Common myeloid progenitor, CD34-positive (primary cell): ENCODE measurements at regions of chr22 and their contacts with region 1.

Region 1: GRCh38 chr22:40088818-40089217 is 88.9 kb upstream of the TNRC6B start:
- DNase-seq: no peak
- H3K4me3 ChIP-seq: no peak overlapping the region
- H3K27ac ChIP-seq: no peak overlapping the region
- H3K4me1 ChIP-seq: peaks cover 7 to 18% (median 8%) of the 10 kb centered on the region in 4 experiments
- H3K27me3 ChIP-seq: no peaks in the 10 kb centered on the region

Region 2: DNA sequence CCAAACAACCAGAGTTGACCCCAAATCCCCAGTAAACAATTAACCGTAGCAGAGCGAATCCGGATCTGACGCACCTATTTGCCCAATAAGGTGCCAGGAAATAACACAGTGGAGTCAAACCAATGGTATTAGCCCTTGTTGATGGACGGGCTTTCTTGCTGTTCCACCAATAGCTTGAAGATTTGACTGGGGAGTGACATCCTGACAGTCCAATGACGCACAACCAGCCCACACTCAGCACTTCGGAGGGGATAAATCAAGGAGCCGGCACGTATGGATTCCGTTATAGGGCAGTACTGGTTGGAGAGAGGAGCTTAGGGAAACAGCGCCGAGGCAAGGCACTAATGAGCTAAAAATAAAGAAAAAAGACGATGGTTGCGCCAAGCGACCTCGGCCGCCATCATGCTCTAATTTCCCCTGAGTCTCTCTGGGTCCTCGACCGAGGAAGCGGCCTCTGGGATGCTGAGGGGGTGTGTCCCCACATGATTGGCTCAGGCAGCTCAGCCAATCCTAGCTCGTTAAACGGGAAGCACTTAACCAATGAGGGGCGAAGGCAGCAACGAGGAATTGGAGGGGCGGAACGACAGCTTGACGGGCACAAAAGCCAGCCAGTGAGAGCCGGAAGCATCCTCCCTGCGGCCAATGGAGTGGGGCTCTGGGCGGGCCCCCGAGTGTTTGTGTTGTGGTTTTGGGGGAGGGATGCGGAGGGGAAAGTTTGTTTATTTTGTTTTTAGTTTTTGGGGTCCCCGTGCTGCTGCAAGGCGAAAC is 44.5 kb before region 1 on chr22:
- CTCF ChIA-PET with region 1: interaction called, 3 read pairs
- POLR2A ChIA-PET with region 1: interaction called, 10 read pairs
- DNase-seq: peak; percentile 100
- H3K4me3 ChIP-seq: peak overlapping the region; percentile 75 to 98 (median 85)
- H3K27ac ChIP-seq: peak overlapping the region; percentile 96 to 97
- H3K4me1 ChIP-seq: peaks cover 14 to 48% (median 39%) of the 10 kb centered on the region in 4 experiments
- H3K27me3 ChIP-seq: no peaks in the 10 kb centered on the region

Region 3: GRCh38 chr22:40178417-40179409 is 89.9 kb after region 1 on chr22:
- CTCF ChIA-PET with region 1: no interaction called
- POLR2A ChIA-PET with region 1: no interaction called
- DNase-seq: peak in 2 of 3 donors; percentile 40 to 49
- H3K4me3 ChIP-seq: peak overlapping the region; percentile 14 to 100 (median 88)
- H3K27ac ChIP-seq: peak overlapping the region; percentile 80 to 88
- H3K4me1 ChIP-seq: peaks cover 25 to 60% (median 47%) of the 10 kb centered on the region in 4 experiments
- H3K27me3 ChIP-seq: no peaks in the 10 kb centered on the region